ENCODE measurements at regions of chr12 and their contacts with region 1.

Region 1: GRCh38 chr12:48510111-48510510 is 15.3 kb upstream of the OR8S1 start:
- DNase-seq: no peak
- H3K4me3 Mint-ChIP-seq: no peak overlapping the region
- H3K27ac Mint-ChIP-seq: no peak overlapping the region
- H3K4me1 Mint-ChIP-seq: no peaks in the 10 kb centered on the region
- H3K27me3 Mint-ChIP-seq: peaks cover 61% of the 10 kb centered on the region
- CTCF ChIP-seq: no peak

Region 2: DNA sequence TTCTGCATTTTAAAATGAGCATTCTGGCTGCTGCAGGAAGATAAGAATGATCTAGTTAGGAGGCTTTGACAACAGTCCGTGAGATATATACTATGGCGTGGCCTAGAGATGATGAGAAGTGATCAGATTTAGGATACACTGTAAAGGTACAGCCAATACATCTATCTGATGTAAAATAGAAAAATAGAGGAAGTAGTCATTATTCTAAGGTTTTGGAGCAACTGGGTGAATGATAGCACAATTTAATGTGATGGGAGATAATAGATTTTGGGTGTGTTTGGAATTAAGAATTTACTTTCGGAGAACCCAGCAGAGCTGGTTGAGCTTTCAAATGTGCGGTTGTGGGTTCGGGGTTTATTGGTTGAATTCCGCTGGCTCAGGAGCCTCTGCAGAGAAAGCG is 37.9 kb before region 1 on chr12 and contains the start of gene ANP32D:
- CTCF ChIA-PET with region 1: no interaction called
- POLR2A ChIA-PET with region 1: no interaction called
- intact Hi-C with region 1: loop called (anchors 2 kb)
- DNase-seq: no peak
- H3K4me3 Mint-ChIP-seq: no peak within 1 kb of the TSS
- H3K27ac Mint-ChIP-seq: no peak within 1 kb of the TSS
- H3K4me1 Mint-ChIP-seq: no peaks in the 10 kb centered on the region
- H3K27me3 Mint-ChIP-seq: peaks cover 9% of the 10 kb centered on the region
- CTCF ChIP-seq: no peak
- total RNA-seq, gene ANP32D: not detected in 2 replicates

Region 3: GRCh38 chr12:48525332-48525731 is 15.2 kb after region 1 on chr12 and contains the start of gene OR8S1:
- CTCF ChIA-PET with region 1: no interaction called
- POLR2A ChIA-PET with region 1: no interaction called
- intact Hi-C with region 1: no loop called
- DNase-seq: no peak
- H3K4me3 Mint-ChIP-seq: no peak within 1 kb of the TSS
- H3K27ac Mint-ChIP-seq: no peak within 1 kb of the TSS
- H3K4me1 Mint-ChIP-seq: no peaks in the 10 kb centered on the region
- H3K27me3 Mint-ChIP-seq: no peaks in the 10 kb centered on the region
- CTCF ChIP-seq: no peak
- total RNA-seq, gene OR8S1: not detected in 2 replicates